PC-3 (cell line): ENCODE measurements at regions of chr5 and their contacts with region 1.

Region 1: GRCh38 chr5:23507278-23507685 is at the start of gene PRDM9:
- DNase-seq: peak; percentile 98
- ATAC-seq: peak; percentile 93
- H3K4me3 ChIP-seq: peak within 1 kb of the TSS; percentile 70
- H3K27ac ChIP-seq: peak within 1 kb of the TSS; percentile 75
- H3K4me1 ChIP-seq: peaks cover 7% of the 10 kb centered on the region; the same call in 1 of the 2 replicates
- H3K27me3 ChIP-seq: no peaks in the 10 kb centered on the region
- CTCF ChIP-seq: no peak
- total RNA-seq, gene PRDM9: 0.11 and 0.12 TPM in 2 replicates

Region 2: DNA sequence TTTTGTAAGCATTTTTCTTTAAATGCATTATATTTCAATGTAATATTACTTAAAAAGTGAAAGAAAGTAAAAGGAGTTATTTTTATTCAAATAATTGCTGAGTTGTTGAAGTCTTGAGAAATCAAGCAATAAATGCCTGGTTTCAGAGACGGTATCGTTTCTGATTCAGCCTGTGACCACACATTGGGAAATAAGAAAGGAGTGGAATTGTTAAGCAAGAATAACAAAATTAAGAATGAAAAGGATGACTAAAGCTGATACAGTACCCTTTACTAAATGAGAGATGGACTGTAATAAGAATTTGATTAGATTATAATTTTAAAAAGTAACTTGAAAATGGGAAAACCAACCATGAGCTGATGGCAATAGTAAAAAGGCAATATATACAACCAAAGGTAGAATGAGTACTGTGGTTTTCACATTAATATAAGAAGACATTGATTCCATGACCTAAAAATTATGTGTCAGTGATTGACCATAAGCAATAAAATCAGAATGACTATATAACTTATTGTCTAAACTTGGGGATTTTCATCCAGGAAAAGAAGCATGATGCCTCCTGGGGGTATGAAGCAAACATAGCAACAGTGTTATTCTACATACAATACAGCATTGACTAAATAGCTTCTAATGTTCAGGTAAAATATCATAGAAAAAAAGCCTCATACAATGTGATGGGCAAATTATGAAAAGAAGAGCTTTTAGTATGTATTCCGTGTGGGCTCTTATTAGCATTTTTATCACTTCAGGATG is 101.8 kb before region 1 on chr5:
- CTCF ChIA-PET with region 1: no interaction called
- POLR2A ChIA-PET with region 1: no interaction called
- intact Hi-C with region 1: loop called (anchors 5 kb)
- DNase-seq: peak; percentile 44
- ATAC-seq: no peak
- H3K4me3 ChIP-seq: no peak overlapping the region
- H3K27ac ChIP-seq: no peak overlapping the region
- H3K4me1 ChIP-seq: peaks cover 8% of the 10 kb centered on the region
- H3K27me3 ChIP-seq: no peaks in the 10 kb centered on the region
- CTCF ChIP-seq: peak; percentile 63

Region 3: DNA sequence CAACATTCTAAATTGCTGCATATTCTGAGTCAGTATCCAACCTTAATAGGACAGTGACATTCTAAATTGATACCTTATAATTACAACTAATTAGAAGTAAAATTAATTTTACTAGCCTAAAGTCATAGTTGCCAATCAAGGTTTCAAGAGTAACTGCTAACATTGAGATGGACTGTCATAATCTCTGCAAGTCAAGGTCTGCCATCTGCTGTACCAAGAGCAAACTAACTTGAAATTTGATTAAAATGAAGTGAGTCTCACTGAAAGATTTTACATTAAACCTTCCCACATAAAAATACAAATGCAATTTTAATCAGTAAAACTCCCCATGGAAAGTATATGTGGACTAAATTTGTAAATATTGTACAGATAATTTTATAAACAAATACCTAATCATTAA is 235.4 kb after region 1 on chr5:
- CTCF ChIA-PET with region 1: no interaction called
- POLR2A ChIA-PET with region 1: no interaction called
- intact Hi-C with region 1: loop called (anchors 1 kb)
- DNase-seq: peak; percentile 19
- ATAC-seq: no peak
- H3K4me3 ChIP-seq: no peak overlapping the region
- H3K27ac ChIP-seq: no peak overlapping the region
- H3K4me1 ChIP-seq: peaks cover 7% of the 10 kb centered on the region; the same call in 1 of the 2 replicates
- H3K27me3 ChIP-seq: no peaks in the 10 kb centered on the region
- CTCF ChIP-seq: peak; percentile 55

Region 4: GRCh38 chr5:24226479-24226878 is 719.2 kb after region 1 on chr5:
- CTCF ChIA-PET with region 1: no interaction called
- POLR2A ChIA-PET with region 1: no interaction called
- intact Hi-C with region 1: no loop called
- DNase-seq: no peak
- ATAC-seq: no peak
- H3K4me3 ChIP-seq: no peak overlapping the region
- H3K27ac ChIP-seq: no peak overlapping the region
- H3K4me1 ChIP-seq: peaks cover 23% of the 10 kb centered on the region
- H3K27me3 ChIP-seq: no peaks in the 10 kb centered on the region
- CTCF ChIP-seq: no peak